Activated T-helper 1 cell treated with anti-CD3 and anti-CD28 coated beads, Interleukin-12 subunit alpha, Interleukin-12 subunit beta, Interleukin-2, Interleukin-4 antibody, amounts not matched to agents 30 ng/mL and 10 ng/mL and 1 ng/mL, durations not matched to agents 14 hours and 24 hours and 36 hours (primary cell): ENCODE measurements at regions of chr2 and their contacts with region 1.

Region 1: GRCh38 chr2:27356382-27357181 is at the start of gene GTF3C2:
- DNase-seq: peak; percentile 89
- H3K4me3 Mint-ChIP-seq: peak within 1 kb of the TSS; percentile 98
- H3K27ac Mint-ChIP-seq: peak within 1 kb of the TSS; percentile 99
- H3K4me1 Mint-ChIP-seq: peaks cover 47% of the 10 kb centered on the region
- H3K27me3 Mint-ChIP-seq: no peaks in the 10 kb centered on the region
- total RNA-seq, gene GTF3C2: 86.3 and 86.6 TPM in 2 replicates

Region 2: GRCh38 chr2:26054598-26055348 is 1301.8 kb before region 1 on chr2:
- intact Hi-C with region 1: no loop called
- DNase-seq: no peak
- H3K4me3 Mint-ChIP-seq: no peak overlapping the region
- H3K27ac Mint-ChIP-seq: no peak overlapping the region
- H3K4me1 Mint-ChIP-seq: peaks cover 55% of the 10 kb centered on the region
- H3K27me3 Mint-ChIP-seq: no peaks in the 10 kb centered on the region

Region 3: DNA sequence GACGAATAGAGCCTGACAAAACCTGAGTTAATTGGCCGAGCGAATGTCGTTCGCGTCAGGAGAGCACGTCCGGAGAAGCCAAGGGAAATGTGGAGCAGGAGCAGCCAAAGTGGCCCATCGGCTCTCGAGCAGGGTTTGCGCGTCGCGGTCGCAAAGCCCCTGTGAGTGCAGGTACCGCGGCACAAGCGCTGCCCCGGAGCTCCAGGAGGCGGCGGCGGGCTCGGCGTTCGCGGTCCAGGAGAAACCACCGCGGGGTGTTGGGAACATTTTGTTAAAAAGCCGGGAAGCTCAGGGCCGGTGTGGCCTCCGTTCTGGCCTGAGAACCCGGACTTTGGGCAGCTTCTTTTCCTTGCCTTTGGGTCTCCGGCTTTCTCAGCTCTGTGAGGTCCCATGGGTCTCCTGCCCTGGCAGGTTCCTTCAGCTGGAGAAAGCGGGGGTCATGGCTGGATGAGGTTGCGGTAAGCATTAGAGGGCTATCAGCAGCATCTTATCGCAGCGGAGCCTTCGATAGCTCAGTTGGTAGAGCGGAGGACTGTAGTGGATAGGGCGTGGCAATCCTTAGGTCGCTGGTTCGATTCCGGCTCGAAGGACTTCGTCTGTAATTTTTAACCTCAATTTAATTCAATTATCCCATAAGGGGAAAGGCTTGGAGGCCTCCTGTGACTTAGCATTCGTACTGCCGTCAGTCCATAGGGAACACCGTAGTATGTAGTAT is 306.1 kb before region 1 on chr2:
- intact Hi-C with region 1: loop called (anchors 5 kb)
- DNase-seq: peak; percentile 88
- H3K4me3 Mint-ChIP-seq: peak overlapping the region; percentile 96
- H3K27ac Mint-ChIP-seq: peak overlapping the region; percentile 99
- H3K4me1 Mint-ChIP-seq: peaks cover 36% of the 10 kb centered on the region
- H3K27me3 Mint-ChIP-seq: peaks cover 7% of the 10 kb centered on the region

Region 4: DNA sequence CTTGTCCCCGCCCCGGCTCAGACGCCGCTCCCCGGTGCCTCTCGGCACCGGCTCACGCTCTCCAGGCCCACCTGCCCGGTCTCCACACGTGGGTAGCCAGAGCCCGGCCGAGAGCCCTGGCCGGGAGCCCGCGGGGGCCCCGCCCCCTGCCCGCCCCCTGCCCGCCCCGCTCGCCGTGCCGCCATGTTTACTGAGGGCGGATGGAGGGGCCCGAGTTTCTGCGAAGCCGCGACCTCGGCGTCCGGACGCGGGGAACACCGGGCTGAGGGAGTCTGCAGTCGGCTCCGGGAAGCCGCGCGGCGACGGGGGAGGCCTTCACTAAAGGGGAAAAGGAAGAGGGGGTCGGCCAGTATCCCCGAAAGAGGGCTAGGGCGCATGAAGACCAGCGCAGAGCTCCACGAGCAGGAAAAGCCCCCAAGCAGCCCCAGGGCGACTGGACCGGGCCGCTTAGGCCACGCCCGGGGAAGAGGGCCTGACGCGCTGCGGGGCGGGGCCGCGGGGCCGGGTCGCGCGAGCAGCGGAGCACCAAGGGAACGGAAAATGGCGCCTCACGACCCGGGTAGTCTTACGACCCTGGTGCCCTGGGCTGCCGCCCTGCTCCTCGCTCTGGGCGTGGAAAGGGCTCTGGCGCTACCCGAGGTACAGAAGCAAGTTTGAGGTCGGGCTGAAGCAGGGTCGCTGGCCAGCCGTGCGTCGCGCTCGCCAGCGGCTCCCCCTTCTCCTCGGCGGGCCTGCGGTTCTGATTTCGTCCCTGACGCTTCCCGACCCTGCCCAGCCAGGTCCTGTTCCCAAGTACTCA is 144.6 kb before region 1 on chr2 and contains the starts of genes ATRAID and SLC5A6:
- intact Hi-C with region 1: loop called (anchors 2 kb)
- DNase-seq: peak; percentile 90
- H3K4me3 Mint-ChIP-seq: peak within 1 kb of the TSS; percentile 99
- H3K27ac Mint-ChIP-seq: peak within 1 kb of the TSS; percentile 100
- H3K4me1 Mint-ChIP-seq: peaks cover 53% of the 10 kb centered on the region
- H3K27me3 Mint-ChIP-seq: no peaks in the 10 kb centered on the region
- total RNA-seq, gene ATRAID: 107 and 111 TPM in 2 replicates
- total RNA-seq, gene SLC5A6: 89.2 and 105 TPM in 2 replicates

Region 5: DNA sequence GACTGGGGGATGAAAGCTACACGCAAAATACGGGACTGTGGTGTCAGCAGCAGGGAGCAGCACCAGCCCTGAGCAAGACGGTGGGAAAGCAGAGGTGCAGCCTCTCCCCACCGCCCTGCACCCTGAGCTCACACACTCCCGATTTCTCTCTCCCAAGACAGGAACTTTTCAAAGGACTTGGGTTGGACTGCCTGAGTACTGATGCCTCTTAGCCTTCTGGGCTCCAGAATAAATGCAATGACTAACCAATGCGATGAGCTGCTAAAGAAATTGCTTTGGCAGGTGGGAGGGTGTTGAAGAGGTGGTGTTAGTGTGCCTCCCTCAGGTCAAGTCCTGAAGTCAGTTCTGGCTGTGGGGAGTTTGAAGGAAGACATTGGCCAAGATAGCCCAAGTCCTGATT is 64.7 kb before region 1 on chr2:
- intact Hi-C with region 1: no loop called
- DNase-seq: no peak
- H3K4me3 Mint-ChIP-seq: no peak overlapping the region
- H3K27ac Mint-ChIP-seq: no peak overlapping the region
- H3K4me1 Mint-ChIP-seq: no peaks in the 10 kb centered on the region
- H3K27me3 Mint-ChIP-seq: peaks cover 29% of the 10 kb centered on the region

Region 6: DNA sequence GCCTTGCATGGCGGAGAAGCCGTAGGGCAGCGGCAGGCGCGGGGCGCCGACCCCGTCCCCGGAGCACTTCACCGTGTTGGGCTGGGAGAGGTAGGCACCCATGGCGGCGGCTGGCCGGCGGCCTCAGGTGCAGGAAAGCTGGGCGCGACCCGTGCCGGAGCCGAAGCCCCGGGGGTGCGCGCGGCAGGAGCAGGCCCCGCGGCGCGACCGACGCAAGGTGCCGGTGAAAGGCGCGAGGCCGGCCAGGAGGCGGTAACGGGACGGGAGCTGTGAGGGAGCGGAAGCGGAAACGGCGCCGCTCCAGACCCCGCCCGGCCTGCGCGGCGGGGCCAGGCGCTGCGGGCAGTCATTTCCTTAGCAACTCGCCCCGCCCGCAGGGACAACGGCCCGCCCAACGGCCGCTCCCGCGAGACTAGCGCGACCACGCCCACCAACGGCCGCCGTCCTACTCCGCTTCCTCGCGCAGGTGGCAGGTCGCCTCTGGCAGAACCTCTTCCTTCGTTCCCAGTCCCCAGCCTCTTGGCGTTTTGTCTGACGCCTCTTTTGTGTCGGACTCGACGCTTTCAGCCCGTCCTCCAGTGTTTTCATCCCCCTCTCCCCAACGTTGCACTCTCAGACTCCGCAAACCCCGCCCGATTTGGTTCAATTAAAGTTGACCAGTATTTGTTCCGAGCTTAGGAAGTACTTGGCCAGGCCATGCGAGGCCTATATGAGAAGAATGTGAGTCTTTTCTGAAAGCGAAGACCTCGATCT is 52.9 kb after region 1 on chr2 and contains the start of gene PPM1G:
- intact Hi-C with region 1: loop called (anchors 1 kb)
- DNase-seq: peak; percentile 95
- H3K4me3 Mint-ChIP-seq: peak within 1 kb of the TSS; percentile 90
- H3K27ac Mint-ChIP-seq: peak within 1 kb of the TSS; percentile 89
- H3K4me1 Mint-ChIP-seq: peaks cover 29% of the 10 kb centered on the region
- H3K27me3 Mint-ChIP-seq: peaks cover 2% of the 10 kb centered on the region
- total RNA-seq, gene PPM1G: 158 and 160 TPM in 2 replicates

Region 7: GRCh38 chr2:27638037-27638637 is 281.6 kb after region 1 on chr2:
- intact Hi-C with region 1: loop called (anchors 5 kb)
- DNase-seq: no peak
- H3K4me3 Mint-ChIP-seq: peak overlapping the region; percentile 66
- H3K27ac Mint-ChIP-seq: peak overlapping the region; percentile 91
- H3K4me1 Mint-ChIP-seq: peaks cover 19% of the 10 kb centered on the region
- H3K27me3 Mint-ChIP-seq: no peaks in the 10 kb centered on the region

Region 8: GRCh38 chr2:28894470-28895177 is 1538.0 kb after region 1 on chr2 and contains the start of gene WDR43:
- intact Hi-C with region 1: loop called (anchors 10 kb)
- DNase-seq: peak; percentile 99
- H3K4me3 Mint-ChIP-seq: peak within 1 kb of the TSS; percentile 100
- H3K27ac Mint-ChIP-seq: peak within 1 kb of the TSS; percentile 96
- H3K4me1 Mint-ChIP-seq: peaks cover 40% of the 10 kb centered on the region
- H3K27me3 Mint-ChIP-seq: no peaks in the 10 kb centered on the region
- total RNA-seq, gene WDR43: 188 and 190 TPM in 2 replicates